MCF 10A (cell line): ENCODE measurements at regions of chr15 and their contacts with region 1.

Region 1: GRCh38 chr15:89399238-89400120 is 64.9 kb upstream of the POLG start:
- DNase-seq: no peak
- H3K4me3 Mint-ChIP-seq: no peak overlapping the region
- H3K27ac Mint-ChIP-seq: no peak overlapping the region
- H3K4me1 Mint-ChIP-seq: peaks cover 26% of the 10 kb centered on the region
- H3K27me3 Mint-ChIP-seq: no peaks in the 10 kb centered on the region
- CTCF ChIP-seq: peak; percentile 13

Region 2: GRCh38 chr15:89416141-89416853 is 16.8 kb after region 1 on chr15:
- CTCF ChIA-PET with region 1: interaction called, 14 read pairs
- POLR2A ChIA-PET with region 1: interaction called, 4 read pairs
- intact Hi-C with region 1: no loop called
- DNase-seq: peak; percentile 73
- H3K4me3 Mint-ChIP-seq: no peak overlapping the region
- H3K27ac Mint-ChIP-seq: no peak overlapping the region
- H3K4me1 Mint-ChIP-seq: no peaks in the 10 kb centered on the region
- H3K27me3 Mint-ChIP-seq: peaks cover 82% of the 10 kb centered on the region
- CTCF ChIP-seq: peak; percentile 92